ENCODE measurements at regions of chr6 and their contacts with region 1.

Region 1: DNA sequence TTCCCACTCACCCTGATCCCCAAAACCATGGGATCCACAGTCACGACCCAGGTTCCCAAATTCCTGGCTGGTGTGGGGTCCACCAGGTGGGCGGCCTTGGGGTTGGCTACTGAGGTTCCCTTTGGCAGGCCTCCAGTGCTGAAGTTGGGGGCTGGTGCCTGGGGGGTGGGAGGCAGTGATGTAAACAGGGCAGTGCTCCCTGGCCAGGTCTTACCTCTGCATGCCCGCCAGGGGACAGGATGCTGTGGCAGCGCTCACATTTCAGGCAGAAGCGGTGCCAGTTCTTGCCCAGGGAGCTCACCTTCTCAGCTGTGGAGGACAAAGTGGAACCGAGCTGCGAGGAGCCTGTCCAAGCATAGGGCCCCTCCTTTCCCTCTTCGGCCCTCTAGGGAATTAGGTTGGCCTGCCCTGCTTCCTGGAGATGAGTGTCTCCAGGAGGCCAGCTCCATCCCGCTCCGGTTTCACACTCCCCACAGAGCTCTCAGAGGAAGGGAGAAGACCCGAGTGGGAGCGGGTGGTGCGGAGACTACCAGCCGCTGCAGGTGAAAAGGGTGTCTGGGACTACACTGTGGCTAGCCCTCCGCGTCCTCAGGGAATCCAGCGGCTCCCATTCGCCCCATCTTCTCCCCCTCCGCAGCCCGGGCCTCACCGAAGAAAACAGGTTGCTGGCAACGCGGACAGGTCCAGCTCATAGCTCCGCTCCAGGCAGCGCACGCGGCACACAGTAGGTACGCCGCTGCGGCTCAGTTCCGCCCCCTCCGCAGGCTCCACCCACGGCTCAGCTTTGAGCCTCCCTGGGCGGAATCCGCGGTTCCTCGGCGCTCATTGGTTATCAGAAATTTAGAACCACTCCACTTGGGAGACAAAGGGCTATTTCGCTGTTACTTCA is at the start of gene CRIP3:
- DNase-seq: peak; percentile 72
- H3K4me3 Mint-ChIP-seq: peak within 1 kb of the TSS; percentile 67
- H3K27ac Mint-ChIP-seq: no peak within 1 kb of the TSS
- H3K4me1 Mint-ChIP-seq: peaks cover 13% of the 10 kb centered on the region
- H3K27me3 Mint-ChIP-seq: peaks cover 46% of the 10 kb centered on the region

Region 2: DNA sequence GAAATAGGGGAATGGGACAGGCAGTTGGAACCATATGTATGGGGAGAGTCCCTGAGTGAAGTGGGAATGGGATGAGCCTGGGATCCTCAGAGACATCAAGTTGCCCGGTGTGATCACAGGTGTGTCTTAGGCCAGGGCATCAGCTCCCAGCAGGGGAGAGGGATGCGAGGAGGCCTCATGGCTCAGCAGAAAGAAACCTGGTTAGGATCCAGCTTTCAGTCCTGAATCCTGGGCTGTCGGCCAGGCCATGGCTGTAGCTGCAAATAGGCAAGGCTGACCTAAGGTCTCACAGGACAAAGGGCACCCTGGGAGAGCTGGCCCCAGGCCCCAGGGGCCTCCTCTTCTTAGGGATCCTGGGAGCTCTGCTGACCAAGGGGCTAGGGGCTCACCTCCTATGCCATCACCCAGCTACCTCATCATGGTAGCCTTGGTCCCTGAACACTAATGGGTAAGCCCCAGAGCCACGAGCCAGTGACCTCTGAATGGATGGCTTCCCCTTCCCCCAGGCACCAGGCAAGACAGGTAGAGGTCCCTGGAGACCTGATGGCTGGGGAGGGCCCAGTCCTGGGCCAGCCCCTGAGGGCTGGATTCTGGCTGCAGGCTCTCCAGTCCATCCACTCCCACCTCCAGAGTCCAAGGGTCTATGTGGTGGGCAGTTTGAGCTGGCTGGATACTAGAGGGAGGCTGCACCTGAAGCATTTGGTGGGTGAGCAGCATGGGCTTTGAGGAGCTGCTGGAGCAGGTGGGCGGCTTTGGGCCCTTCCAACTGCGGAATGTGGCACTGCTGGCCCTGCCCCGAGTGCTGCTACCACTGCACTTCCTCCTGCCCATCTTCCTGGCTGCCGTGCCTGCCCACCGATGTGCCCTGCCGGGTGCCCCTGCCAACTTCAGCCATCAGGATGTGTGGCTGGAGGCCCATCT is 10.4 kb before region 1 on chr6 and contains the start of gene SLC22A7:
- CTCF ChIA-PET with region 1: interaction called, 14 read pairs
- DNase-seq: no peak
- H3K4me3 Mint-ChIP-seq: no peak within 1 kb of the TSS
- H3K27ac Mint-ChIP-seq: no peak within 1 kb of the TSS
- H3K4me1 Mint-ChIP-seq: no peaks in the 10 kb centered on the region
- H3K27me3 Mint-ChIP-seq: peaks cover 63% of the 10 kb centered on the region

Region 3: GRCh38 chr6:43396407-43397149 is 88.2 kb after region 1 on chr6:
- CTCF ChIA-PET with region 1: interaction called, 22 read pairs
- DNase-seq: no peak
- H3K4me3 Mint-ChIP-seq: no peak overlapping the region
- H3K27ac Mint-ChIP-seq: no peak overlapping the region
- H3K4me1 Mint-ChIP-seq: peaks cover 12% of the 10 kb centered on the region
- H3K27me3 Mint-ChIP-seq: peaks cover 63% of the 10 kb centered on the region

Region 4: DNA sequence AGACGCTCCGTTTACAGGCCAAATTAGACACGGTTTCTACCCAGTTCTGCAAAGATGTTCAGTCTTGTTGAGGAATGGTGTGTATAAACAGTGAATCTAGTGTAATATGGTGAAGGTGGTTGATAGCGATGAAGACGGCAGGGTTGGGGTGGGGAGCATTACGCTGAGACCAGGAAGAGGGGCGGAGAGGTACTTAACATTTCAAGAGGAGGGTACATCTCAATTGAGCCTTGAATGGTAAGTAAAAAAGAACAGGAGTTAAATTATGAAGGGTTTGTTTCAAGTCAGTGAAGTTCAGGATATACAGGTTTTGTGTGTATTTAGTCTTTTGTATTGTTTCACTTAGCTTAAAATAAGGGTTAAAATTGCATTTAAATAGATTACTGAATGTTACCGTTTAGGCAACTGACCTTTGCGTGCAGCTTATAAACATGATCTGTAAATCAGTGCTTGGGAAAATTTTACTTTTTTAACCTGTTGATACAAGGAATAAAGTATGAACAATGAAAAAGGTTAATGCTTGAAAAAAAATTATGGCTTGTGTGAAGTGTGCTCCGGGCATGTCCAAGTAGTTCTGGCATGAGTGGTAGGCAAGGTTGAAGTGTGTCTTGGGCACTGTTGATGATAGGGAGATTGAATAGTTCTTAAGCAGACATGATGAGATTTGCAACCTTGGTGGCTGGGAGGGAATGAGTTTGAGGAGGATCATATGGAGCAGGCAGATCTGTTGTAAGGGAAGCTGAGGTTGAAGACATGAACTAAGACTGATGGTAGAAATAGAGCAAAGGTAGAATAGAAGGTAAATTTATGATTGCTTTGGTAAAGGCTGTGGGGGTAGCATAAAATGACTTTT is 209.4 kb after region 1 on chr6:
- CTCF ChIA-PET with region 1: no interaction called
- DNase-seq: peak; percentile 26
- H3K4me3 Mint-ChIP-seq: no peak overlapping the region
- H3K27ac Mint-ChIP-seq: no peak overlapping the region
- H3K4me1 Mint-ChIP-seq: peaks cover 28% of the 10 kb centered on the region
- H3K27me3 Mint-ChIP-seq: no peaks in the 10 kb centered on the region